ENCODE measurements at regions of chr1 and their contacts with region 1.

Region 1: GRCh38 chr1:202728951-202729350 is 18.7 kb upstream of the SYT2 start:
- DNase-seq: no peak
- H3K4me3 ChIP-seq: no peak overlapping the region
- H3K27ac ChIP-seq: no peak overlapping the region
- H3K4me1 ChIP-seq: no peaks in the 10 kb centered on the region
- H3K27me3 ChIP-seq: no peaks in the 10 kb centered on the region
- CTCF ChIP-seq: no peak

Region 2: GRCh38 chr1:202348509-202349205 is 380.3 kb before region 1 on chr1 and contains the start of gene PPP1R12B:
- intact Hi-C with region 1: loop called (anchors 10 kb)
- DNase-seq: peak; percentile 97
- H3K4me3 ChIP-seq: peak within 1 kb of the TSS; percentile 89
- H3K27ac ChIP-seq: peak within 1 kb of the TSS; percentile 95
- H3K4me1 ChIP-seq: peaks cover 53% of the 10 kb centered on the region
- H3K27me3 ChIP-seq: no peaks in the 10 kb centered on the region
- CTCF ChIP-seq: no peak
- total RNA-seq, gene PPP1R12B: 706 TPM